GM12878 (cell line): ENCODE measurements at regions of chr1 and their contacts with region 1.

Region 1: GRCh38 chr1:202009326-202010179 is 834 bp upstream of the ELF3 start:
- DNase-seq: peak; percentile 25
- ATAC-seq: peak; percentile 79
- H3K4me3 ChIP-seq: 0 out of 2 replicates have a peak overlapping the region, but pooled peaks have one; percentile 28
- H3K27ac ChIP-seq: no peak overlapping the region
- H3K4me1 ChIP-seq: peaks cover 11% of the 10 kb centered on the region
- H3K27me3 ChIP-seq: no peaks in the 10 kb centered on the region
- CTCF ChIP-seq: peak; percentile 79 to 91 (median 86)
- EP300 ChIP-seq: no peak
- POLR2A ChIP-seq: no peak
- RAD21 ChIP-seq: peak; percentile 84

Region 2: GRCh38 chr1:202034683-202035462 is 25.3 kb after region 1 on chr1:
- CTCF ChIA-PET with region 1: interaction called, 5 read pairs
- POLR2A ChIA-PET with region 1: interaction called, 12 read pairs
- RAD21 ChIA-PET with region 1: interaction called, 14 read pairs
- SMC1A ChIA-PET with region 1: interaction called, 12 read pairs
- in situ Hi-C with region 1: no loop called
- intact Hi-C with region 1: no loop called
- DNase-seq: peak; percentile 35
- ATAC-seq: peak; percentile 89
- H3K4me3 ChIP-seq: no peak overlapping the region
- H3K27ac ChIP-seq: no peak overlapping the region
- H3K4me1 ChIP-seq: peaks cover 13% of the 10 kb centered on the region
- H3K27me3 ChIP-seq: no peaks in the 10 kb centered on the region
- CTCF ChIP-seq: no peak
- EP300 ChIP-seq: 0 out of 4 replicates have a peak, but pooled peaks of 1 of the 2 experiments have one; percentile 41
- POLR2A ChIP-seq: no peak
- RAD21 ChIP-seq: no peak

Region 3: GRCh38 chr1:202112839-202113672 is 103.5 kb after region 1 on chr1:
- CTCF ChIA-PET with region 1: interaction called, 171 read pairs
- POLR2A ChIA-PET with region 1: interaction called, 8 read pairs
- RAD21 ChIA-PET with region 1: interaction called, 76 read pairs
- SMC1A ChIA-PET with region 1: interaction called, 67 read pairs
- in situ Hi-C with region 1: no loop called
- intact Hi-C with region 1: loop called (anchors 1 kb)
- DNase-seq: no peak
- ATAC-seq: peak; percentile 24
- H3K4me3 ChIP-seq: no peak overlapping the region
- H3K27ac ChIP-seq: no peak overlapping the region
- H3K4me1 ChIP-seq: peaks cover 14% of the 10 kb centered on the region
- H3K27me3 ChIP-seq: no peaks in the 10 kb centered on the region
- CTCF ChIP-seq: no peak
- EP300 ChIP-seq: no peak
- POLR2A ChIP-seq: no peak
- RAD21 ChIP-seq: no peak

Region 4: DNA sequence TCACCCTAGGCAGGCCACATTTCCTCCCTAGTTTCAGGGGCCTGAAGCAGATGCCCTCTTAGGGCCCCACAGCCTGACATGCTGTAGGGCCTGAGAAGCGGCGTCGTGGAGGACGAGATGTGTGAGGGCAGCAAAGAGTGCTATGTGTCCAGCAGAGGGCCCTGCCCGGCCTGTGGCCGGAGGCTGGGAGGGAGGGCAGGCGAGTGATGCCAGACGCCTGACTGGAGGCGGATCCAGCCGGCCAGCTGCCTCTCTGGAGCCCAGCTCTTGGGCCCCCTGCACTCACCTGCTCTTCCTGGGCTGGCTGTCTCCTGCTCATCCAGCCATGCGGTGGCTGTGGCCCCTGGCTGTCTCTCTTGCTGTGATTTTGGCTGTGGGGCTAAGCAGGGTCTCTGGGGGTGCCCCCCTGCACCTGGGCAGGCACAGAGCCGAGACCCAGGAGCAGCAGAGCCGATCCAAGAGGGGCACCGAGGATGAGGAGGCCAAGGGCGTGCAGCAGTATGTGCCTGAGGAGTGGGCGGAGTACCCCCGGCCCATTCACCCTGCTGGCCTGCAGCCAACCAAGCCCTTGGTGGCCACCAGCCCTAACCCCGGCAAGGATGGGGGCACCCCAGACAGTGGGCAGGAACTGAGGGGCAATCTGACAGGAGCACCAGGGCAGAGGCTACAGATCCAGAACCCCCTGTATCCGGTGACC is 113.2 kb after region 1 on chr1 and contains the start of gene GPR37L1:
- CTCF ChIA-PET with region 1: interaction called, 171 read pairs
- POLR2A ChIA-PET with region 1: interaction called, 4 read pairs
- RAD21 ChIA-PET with region 1: interaction called, 76 read pairs
- SMC1A ChIA-PET with region 1: interaction called, 67 read pairs
- in situ Hi-C with region 1: loop called (anchors 5 kb)
- intact Hi-C with region 1: loop called (anchors 1 kb)
- DNase-seq: no peak
- ATAC-seq: no peak
- H3K4me3 ChIP-seq: no peak within 1 kb of the TSS
- H3K27ac ChIP-seq: no peak within 1 kb of the TSS
- H3K4me1 ChIP-seq: no peaks in the 10 kb centered on the region
- H3K27me3 ChIP-seq: peaks cover 0 to 2% of the 10 kb centered on the region in 2 experiments
- CTCF ChIP-seq: no peak
- EP300 ChIP-seq: no peak
- POLR2A ChIP-seq: no peak
- RAD21 ChIP-seq: no peak
- polyA plus RNA-seq, gene GPR37L1: under 0.01 to 0.02 TPM